ENCODE measurements at regions of chr5 and their contacts with region 1.

Region 1: DNA sequence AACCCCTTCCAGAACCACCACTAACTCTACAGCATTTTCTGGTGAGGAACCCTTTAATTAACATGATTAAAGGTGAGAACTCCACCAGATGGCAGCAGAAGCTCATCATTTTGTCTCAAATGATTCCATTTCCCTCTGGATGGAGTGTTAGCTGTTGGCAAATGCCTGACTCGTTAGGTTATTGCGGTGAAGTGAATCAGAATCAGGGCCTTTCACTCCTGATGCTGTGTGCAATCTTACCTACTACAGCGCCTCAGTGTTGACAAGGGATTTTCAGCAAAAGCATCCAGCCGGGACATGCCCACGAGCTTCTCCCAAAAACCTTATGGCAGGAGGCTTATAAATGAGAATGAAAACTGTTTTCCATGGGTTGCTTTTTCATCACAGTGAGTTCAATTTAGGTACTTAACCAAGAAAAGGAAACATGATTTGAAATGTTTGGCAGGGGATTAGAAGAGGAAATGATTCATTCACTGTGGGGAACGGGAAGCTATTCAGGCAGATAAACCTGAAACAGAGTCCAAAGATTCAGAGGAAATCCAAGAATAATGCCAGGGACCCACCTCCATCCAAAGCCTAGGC is 48.0 kb upstream of the CAST start:
- DNase-seq: peak; percentile 92
- ATAC-seq: peak; percentile 91
- H3K4me3 ChIP-seq: peak overlapping the region; percentile 51
- H3K27ac ChIP-seq: peak overlapping the region; percentile 83
- H3K4me1 ChIP-seq: peaks cover 18% of the 10 kb centered on the region
- H3K27me3 ChIP-seq: no peaks in the 10 kb centered on the region
- CTCF ChIP-seq: peak; percentile 70

Region 2: DNA sequence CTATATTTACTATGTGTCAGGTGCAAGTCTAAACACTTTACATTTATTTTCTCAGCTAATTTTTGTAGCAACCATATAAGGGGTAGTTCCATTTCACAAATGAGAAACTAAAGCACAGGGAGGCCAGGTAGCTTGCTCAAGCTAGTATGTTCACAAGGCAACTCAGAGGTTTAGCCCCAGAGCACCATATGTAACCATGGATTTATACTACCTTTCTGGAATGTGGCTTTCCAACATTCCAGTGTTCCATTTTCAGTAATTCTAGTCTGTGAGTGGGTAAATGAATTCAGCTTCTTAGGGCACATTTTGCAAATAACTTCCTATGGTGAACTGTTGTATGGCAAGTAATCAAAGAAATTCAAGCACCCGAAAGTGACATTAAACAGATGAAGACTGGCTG is 23.0 kb after region 1 on chr5:
- CTCF ChIA-PET with region 1: no interaction called
- POLR2A ChIA-PET with region 1: interaction called, 14 read pairs
- intact Hi-C with region 1: no loop called
- DNase-seq: peak; percentile 32
- ATAC-seq: no peak
- H3K4me3 ChIP-seq: no peak overlapping the region
- H3K27ac ChIP-seq: no peak overlapping the region
- H3K4me1 ChIP-seq: no peaks in the 10 kb centered on the region
- H3K27me3 ChIP-seq: no peaks in the 10 kb centered on the region
- CTCF ChIP-seq: no peak

Region 3: DNA sequence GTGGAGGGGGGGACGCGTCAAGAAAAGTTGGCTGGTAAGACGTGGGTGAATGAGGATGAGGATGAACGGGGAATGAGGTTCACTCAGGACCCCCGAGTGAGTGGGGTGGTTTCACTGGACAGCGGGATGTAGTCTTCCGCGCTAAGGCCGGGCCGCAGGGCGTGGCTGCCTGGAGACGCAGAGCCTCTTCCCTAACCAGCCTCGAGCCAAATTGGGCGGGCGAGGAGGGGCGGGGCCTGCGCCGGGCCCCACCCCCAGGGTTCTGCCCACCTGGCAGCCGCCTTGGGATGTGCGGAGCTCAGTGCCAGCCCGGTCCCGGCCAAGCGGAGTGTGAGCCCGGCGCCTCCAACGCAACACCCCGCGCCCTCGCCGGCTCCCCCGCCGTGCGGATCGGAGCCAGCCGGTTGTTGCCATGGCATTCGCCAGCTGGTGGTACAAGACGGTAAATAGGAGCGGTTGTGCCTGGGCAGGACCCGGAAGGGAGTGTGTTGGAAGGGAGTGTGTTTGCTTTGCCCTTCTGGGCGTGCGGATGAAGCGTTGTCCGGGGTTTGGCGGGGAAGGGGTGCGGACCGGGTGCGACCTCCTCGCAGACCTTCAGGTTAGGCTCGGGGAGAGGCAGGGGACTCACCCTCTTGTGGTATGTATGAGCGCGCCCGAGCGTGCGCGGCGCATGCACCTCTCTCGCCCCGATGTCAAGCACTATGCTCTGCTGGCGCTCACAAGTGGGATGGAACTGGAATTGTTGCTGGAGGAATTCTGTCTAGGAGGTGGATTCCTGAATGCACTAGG is 48.7 kb after region 1 on chr5:
- CTCF ChIA-PET with region 1: interaction called, 5 read pairs
- POLR2A ChIA-PET with region 1: interaction called, 15 read pairs
- intact Hi-C with region 1: loop called (anchors 1 kb)
- DNase-seq: peak; percentile 90
- ATAC-seq: peak; percentile 71
- H3K4me3 ChIP-seq: peak overlapping the region; percentile 94
- H3K27ac ChIP-seq: peak overlapping the region; percentile 96
- H3K4me1 ChIP-seq: peaks cover 47% of the 10 kb centered on the region
- H3K27me3 ChIP-seq: no peaks in the 10 kb centered on the region
- CTCF ChIP-seq: no peak

Region 4: GRCh38 chr5:96687812-96688453 is 73.7 kb after region 1 on chr5:
- CTCF ChIA-PET with region 1: interaction called, 13 read pairs
- POLR2A ChIA-PET with region 1: no interaction called
- intact Hi-C with region 1: loop called (anchors 1 kb)
- DNase-seq: peak; percentile 57
- ATAC-seq: peak; percentile 84
- H3K4me3 ChIP-seq: peak overlapping the region; percentile 48
- H3K27ac ChIP-seq: 0 out of 2 replicates have a peak overlapping the region, but pooled peaks have one; percentile 1
- H3K4me1 ChIP-seq: peaks cover 5% of the 10 kb centered on the region
- H3K27me3 ChIP-seq: no peaks in the 10 kb centered on the region
- CTCF ChIP-seq: peak; percentile 71

Region 5: DNA sequence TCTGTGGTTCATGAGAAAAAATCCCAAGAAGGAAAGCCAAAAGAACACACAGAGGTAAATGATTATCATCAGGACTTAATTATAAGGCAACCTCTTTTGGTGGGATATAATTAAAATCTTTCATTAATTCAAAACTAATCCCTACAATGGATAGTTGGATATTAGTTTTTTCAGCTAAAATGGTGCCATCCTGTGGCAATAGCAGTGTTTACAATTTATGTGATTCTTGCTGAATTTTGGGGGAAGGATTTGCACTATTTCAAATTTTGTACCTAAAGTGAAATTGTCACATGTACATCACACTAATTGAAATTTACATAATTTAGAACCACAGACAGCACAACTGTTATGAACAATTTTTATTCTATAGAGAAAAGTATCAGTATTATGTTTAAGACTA is 115.0 kb after region 1 on chr5:
- CTCF ChIA-PET with region 1: no interaction called
- POLR2A ChIA-PET with region 1: no interaction called
- intact Hi-C with region 1: loop called (anchors 1 kb)
- DNase-seq: peak; percentile 37
- ATAC-seq: no peak
- H3K4me3 ChIP-seq: no peak overlapping the region
- H3K27ac ChIP-seq: no peak overlapping the region
- H3K4me1 ChIP-seq: peaks cover 13% of the 10 kb centered on the region
- H3K27me3 ChIP-seq: no peaks in the 10 kb centered on the region
- CTCF ChIP-seq: peak; percentile 73

Region 6: DNA sequence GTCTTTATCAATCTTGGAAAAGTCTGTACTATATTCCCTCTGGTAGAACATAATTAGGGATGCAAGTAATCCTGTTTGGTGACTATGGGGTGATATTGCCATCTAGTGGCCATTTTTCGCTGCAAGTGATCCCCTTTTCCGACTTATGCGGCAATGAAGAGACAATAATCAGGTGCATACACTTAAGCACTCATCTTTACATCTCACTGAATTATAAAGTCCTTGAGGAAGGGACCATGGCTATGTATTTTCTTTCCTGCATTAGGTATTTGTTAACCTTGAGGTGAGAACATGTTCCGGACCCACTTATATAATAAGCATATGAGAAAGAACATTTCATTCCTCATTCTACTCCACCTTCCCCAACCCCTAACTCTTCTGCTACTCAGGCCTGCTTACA is 547.8 kb after region 1 on chr5:
- CTCF ChIA-PET with region 1: no interaction called
- POLR2A ChIA-PET with region 1: no interaction called
- intact Hi-C with region 1: loop called (anchors 2 kb)
- DNase-seq: peak; percentile 87
- ATAC-seq: peak; percentile 84
- H3K4me3 ChIP-seq: no peak overlapping the region
- H3K27ac ChIP-seq: no peak overlapping the region
- H3K4me1 ChIP-seq: 0 out of 2 replicates have a peak, but pooled peaks cover 4% of the 10 kb centered on the region
- H3K27me3 ChIP-seq: no peaks in the 10 kb centered on the region
- CTCF ChIP-seq: peak; percentile 94